Transverse colon (tissue), 4 donors: ENCODE measurements at regions of chr2 and their contacts with region 1.

Region 1: DNA sequence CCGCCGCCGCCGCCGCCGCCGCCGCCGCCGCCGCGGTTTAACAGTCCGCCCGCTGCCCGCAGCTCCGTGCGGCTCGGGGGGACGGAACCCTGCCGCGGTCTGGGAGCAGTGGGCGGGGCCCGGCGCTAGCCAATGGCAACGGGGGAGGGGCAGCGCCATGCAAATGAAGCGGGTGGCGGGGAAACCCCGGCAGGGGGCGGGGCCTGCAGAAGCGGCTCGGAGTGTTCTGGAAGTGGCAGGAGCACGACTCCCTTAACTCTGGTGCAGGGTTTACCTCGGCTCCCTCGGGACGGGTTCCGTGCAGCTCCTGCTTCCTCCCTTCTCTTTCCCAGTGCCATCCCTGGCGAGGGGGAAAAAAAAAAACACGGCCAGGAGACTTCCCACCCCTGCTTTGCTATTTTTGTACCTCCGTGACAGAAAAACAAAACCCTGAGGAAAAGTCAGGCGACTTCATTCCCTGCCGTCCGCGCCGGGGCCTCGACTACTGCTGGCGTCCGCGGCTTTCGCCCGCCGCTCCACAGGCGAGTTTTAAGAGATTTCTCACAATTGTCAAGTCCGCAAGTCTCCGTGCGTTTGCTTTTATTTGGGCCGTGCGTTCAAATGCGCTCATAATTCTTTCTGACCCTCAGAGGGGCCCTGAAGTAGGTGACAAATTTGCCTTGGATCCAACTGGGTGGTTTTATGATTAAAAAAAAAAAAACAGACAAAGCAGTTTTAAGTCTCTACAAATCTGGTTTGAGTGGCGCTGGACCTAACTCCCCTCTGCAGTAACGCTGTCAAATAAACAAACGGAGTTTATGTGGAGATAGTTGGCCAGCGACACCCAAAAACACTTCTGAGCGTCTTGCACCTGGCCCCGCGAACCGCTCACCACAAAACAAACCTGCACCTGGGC is at the start of gene KANSL1L:
- DNase-seq: peak; percentile 100
- H3K4me3 ChIP-seq: peak within 1 kb of the TSS; percentile 90 to 97 (median 96)
- H3K27ac ChIP-seq: peak within 1 kb of the TSS; percentile 99 to 100 (median 100)
- H3K4me1 ChIP-seq: peaks cover 2 to 43% (median 19%) of the 10 kb centered on the region in 4 donors
- H3K27me3 ChIP-seq: no peaks in the 10 kb centered on the region
- CTCF ChIP-seq: no peak
- EP300 ChIP-seq: no peak
- POLR2A ChIP-seq: peak; percentile 75
- total RNA-seq, gene KANSL1L: 13.7 to 43.8 (median 25.5) TPM

Region 2: DNA sequence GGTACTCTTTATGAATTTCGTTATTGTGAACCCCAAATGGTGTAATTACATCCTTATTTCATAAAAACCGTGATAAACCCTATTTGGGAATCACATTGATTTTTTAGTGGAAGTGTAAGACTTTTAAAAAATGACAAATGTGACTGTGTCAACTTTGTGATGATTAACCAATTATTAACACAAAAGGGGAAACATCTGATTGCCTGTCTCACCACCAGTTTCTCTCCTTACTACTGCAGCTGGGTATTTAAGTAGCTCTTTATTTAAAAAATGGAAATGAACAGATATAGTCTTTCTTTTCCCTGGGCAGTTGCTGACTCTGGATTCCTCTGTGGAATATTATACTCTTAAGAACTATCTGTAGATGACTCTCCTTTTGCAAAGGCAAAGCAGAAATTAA is 180.7 kb before region 1 on chr2:
- in situ Hi-C with region 1: loop called in 1 of 4 experiments (anchors 10 kb)
- intact Hi-C with region 1: no loop called
- DNase-seq: no peak
- H3K4me3 ChIP-seq: no peak overlapping the region
- H3K27ac ChIP-seq: no peak overlapping the region
- H3K4me1 ChIP-seq: no peaks in the 10 kb centered on the region
- H3K27me3 ChIP-seq: no peaks in the 10 kb centered on the region
- CTCF ChIP-seq: no peak
- EP300 ChIP-seq: no peak
- POLR2A ChIP-seq: no peak

Region 3: GRCh38 chr2:210002158-210003157 is 169.1 kb before region 1 on chr2 and contains the start of gene RPE:
- in situ Hi-C with region 1: loop called in 1 of 4 experiments (anchors 10 kb)
- intact Hi-C with region 1: loop called (anchors 10 kb)
- DNase-seq: peak; percentile 98
- H3K4me3 ChIP-seq: peak within 1 kb of the TSS; percentile 58 to 94 (median 82)
- H3K27ac ChIP-seq: peak within 1 kb of the TSS; percentile 81 to 91 (median 85)
- H3K4me1 ChIP-seq: peaks cover 6 to 47% (median 24%) of the 10 kb centered on the region in 4 donors
- H3K27me3 ChIP-seq: no peaks in the 10 kb centered on the region
- CTCF ChIP-seq: no peak
- EP300 ChIP-seq: no peak
- POLR2A ChIP-seq: peak; percentile 61
- total RNA-seq, gene RPE: 13.1 to 50.0 (median 30.1) TPM

Region 4: DNA sequence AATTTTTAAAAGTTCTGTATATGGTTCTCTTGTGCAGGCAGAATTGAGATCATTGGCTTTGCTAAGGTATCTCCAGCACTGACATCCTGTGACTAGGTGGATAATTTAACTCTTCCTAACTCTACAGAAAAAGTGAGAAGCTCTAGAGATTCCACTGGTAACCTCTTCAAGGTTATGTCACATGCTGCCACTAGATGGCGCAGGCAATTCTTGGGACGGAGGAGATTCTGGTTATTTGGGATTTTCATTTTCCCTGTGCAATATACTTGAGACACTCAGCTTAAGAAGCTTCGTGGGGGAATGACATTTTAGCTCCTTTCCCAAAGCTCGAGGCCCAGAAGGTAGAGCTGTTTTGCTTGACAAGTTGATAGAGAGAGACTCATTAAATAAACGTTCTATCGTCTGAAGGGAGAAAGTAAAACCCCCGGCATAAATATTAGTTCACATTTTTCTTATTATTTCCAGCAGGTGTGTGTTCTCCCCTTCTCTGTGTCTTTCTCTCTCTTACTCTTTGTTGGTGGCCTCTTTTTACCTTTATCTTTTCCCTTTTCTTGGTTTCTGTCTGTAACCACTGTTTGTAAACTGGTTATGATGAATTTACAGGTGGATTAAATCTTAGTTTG is 331.6 kb after region 1 on chr2:
- in situ Hi-C with region 1: no loop called
- intact Hi-C with region 1: no loop called
- DNase-seq: peak; percentile 48
- H3K4me3 ChIP-seq: peak overlapping the region in 2 of 4 donors; percentile 23 to 44
- H3K27ac ChIP-seq: no peak overlapping the region
- H3K4me1 ChIP-seq: peaks cover 0 to 8% (median 4%) of the 10 kb centered on the region in 4 donors
- H3K27me3 ChIP-seq: no peaks in the 10 kb centered on the region
- CTCF ChIP-seq: peak; percentile 53 to 89 (median 78)
- EP300 ChIP-seq: no peak
- POLR2A ChIP-seq: no peak